ENCODE measurements at regions of chr7 and their contacts with region 1.

Region 1: DNA sequence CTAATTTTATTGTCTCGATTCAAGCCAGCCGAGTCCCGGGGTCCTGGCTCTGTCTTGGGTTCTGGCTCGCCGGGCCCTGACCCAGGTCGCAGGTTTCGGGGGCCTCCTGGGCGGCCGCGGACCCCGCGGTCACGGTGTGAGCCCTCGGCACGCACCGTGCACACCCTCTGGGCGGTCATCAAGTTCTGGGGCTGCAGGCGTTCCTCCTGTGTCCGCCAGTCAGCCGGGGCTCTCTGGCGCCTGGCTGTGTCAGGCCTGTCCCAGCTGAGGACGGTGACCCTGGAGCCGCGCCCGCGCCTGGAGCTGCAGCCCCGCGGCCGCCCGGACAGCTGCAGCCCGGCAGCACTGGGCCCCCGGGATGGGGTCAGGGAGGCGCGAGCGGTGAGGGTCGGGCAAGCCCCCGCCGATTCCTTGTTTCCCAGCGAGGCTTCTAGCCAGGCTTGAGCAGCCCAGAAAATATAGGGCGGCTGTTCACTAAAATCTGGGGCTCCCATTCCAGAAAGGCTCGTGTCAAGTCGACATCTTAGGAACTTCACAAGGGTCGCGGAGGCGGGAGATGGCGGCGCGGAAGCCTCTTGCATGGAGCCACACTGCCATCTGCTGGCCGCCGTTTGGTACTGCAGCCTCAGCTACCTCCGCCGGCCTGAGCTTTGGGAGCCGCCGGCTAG is 4.2 kb upstream of the HOXA7 start:
- DNase-seq: peak; percentile 90
- H3K4me3 ChIP-seq: peak overlapping the region; percentile 61 to 80
- H3K27ac ChIP-seq: peak overlapping the region; percentile 73 to 96
- H3K4me1 ChIP-seq: peaks cover under 1% of the 10 kb centered on the region
- H3K27me3 ChIP-seq: no peaks in the 10 kb centered on the region
- CTCF ChIP-seq: peak; percentile 98 to 100 (median 100)
- POLR2A ChIP-seq: peak; percentile 8

Region 2: GRCh38 chr7:26200444-26201246 is 960.0 kb before region 1 on chr7 and contains the start of gene HNRNPA2B1:
- intact Hi-C with region 1: loop called (anchors 5 kb)
- DNase-seq: peak; percentile 97
- H3K4me3 ChIP-seq: peak within 1 kb of the TSS; percentile 93 to 99
- H3K27ac ChIP-seq: peak within 1 kb of the TSS; percentile 100
- H3K4me1 ChIP-seq: peaks cover 16% of the 10 kb centered on the region
- H3K27me3 ChIP-seq: no peaks in the 10 kb centered on the region
- CTCF ChIP-seq: peak; percentile 24 to 58 (median 36)
- POLR2A ChIP-seq: peak; percentile 100
- total RNA-seq, gene HNRNPA2B1: 185 to 189 TPM

Region 3: GRCh38 chr7:26686448-26686981 is 474.2 kb before region 1 on chr7:
- intact Hi-C with region 1: loop called (anchors 1 kb)
- DNase-seq: no peak
- H3K4me3 ChIP-seq: no peak overlapping the region
- H3K27ac ChIP-seq: no peak overlapping the region
- H3K4me1 ChIP-seq: no peaks in the 10 kb centered on the region
- H3K27me3 ChIP-seq: no peaks in the 10 kb centered on the region
- CTCF ChIP-seq: peak; percentile 49 to 77 (median 66)
- POLR2A ChIP-seq: no peak